ENCODE measurements at regions of chr15 and their contacts with region 1.

Region 1: DNA sequence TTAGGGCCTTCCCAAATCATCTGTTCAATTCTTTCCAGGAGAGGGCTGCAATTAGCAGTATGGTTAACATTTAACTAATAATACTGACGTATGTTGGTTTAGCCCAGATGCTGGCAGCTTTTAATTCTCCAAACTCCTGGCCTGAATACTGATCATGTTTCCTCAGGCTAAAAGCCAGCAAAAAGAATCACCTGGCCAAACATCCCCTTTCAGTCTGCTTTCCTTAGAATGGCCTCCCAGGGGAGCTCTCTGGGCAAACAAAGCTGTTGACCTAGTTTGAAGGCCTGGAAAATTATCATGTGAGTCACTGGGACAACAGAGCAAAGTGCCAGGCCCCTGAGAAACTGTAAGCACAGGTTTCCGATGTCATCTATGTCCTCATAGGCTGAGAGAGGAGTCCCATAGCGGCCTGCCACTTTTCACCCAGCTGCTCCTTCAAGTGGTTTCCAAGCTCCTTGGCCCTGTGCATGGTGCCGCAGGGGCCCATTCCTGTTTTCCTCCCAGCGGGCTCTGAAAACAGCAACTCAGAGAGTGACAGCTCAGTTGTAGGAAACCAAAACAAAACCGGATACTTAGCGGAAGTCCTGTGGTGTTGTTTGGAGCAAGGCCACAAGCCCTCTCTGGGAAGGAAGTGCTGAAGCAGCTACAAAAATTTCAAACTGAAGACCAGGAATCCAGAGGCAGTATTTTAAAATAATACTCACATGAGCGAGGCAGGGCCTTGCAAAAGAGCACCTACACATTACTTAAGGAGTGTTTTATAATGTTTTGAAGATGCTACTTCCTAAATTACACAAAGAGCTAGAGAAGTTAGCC is 36.5 kb upstream of the RAB11A start:
- DNase-seq: peak; percentile 79 to 96
- H3K4me3 ChIP-seq: peak overlapping the region; percentile 12 to 43
- H3K27ac ChIP-seq: peak overlapping the region; percentile 66 to 71
- H3K4me1 ChIP-seq: peaks cover 10 to 25% of the 10 kb centered on the region in 2 donors
- H3K27me3 ChIP-seq: no peaks in the 10 kb centered on the region
- CTCF ChIP-seq: no peak

Region 2: GRCh38 chr15:65869127-65869953 is 36.6 kb after region 1 on chr15 and contains the start of gene RAB11A:
- intact Hi-C with region 1: loop called (anchors 1 kb)
- DNase-seq: peak; percentile 82 to 98
- H3K4me3 ChIP-seq: peak within 1 kb of the TSS; percentile 86 to 96
- H3K27ac ChIP-seq: peak within 1 kb of the TSS; percentile 95 to 97
- H3K4me1 ChIP-seq: peaks cover 3 to 5% of the 10 kb centered on the region in 2 donors
- H3K27me3 ChIP-seq: no peaks in the 10 kb centered on the region
- CTCF ChIP-seq: peak; percentile 15 to 46 (median 33)
- total RNA-seq, gene RAB11A: 192 TPM

Measured in ascending aorta (tissue), 2 donors.